Transverse colon (tissue), 4 donors: ENCODE measurements at regions of chr16 and their contacts with region 1.

Region 1: DNA sequence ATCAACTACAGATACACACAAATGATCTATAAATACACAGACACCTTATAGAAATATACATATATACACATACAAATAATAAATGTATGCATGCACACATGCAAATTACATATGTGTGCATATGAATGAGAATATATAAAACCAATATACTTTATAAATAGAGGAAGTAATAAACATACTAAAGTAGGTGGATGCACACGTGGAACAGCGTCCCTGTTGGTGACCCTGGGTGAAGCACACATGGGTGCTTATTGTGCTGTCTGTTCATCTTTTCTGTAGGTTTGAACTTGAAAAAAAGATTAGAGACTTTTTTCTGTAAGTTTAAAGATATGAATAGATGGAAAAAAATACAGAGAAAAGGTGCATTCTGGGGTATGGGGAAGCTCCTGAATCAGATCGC is 111.3 kb downstream of the SDR42E1 start:
- DNase-seq: no peak
- H3K4me3 ChIP-seq: no peak overlapping the region
- H3K27ac ChIP-seq: no peak overlapping the region
- H3K4me1 ChIP-seq: no peaks in the 10 kb centered on the region
- H3K27me3 ChIP-seq: no peaks in the 10 kb centered on the region
- CTCF ChIP-seq: no peak
- EP300 ChIP-seq: no peak
- POLR2A ChIP-seq: no peak

Region 2: GRCh38 chr16:81876273-81876900 is 23.6 kb before region 1 on chr16:
- in situ Hi-C with region 1: no loop called
- intact Hi-C with region 1: loop called (anchors 1 kb)
- DNase-seq: no peak
- H3K4me3 ChIP-seq: no peak overlapping the region
- H3K27ac ChIP-seq: no peak overlapping the region
- H3K4me1 ChIP-seq: no peaks in the 10 kb centered on the region
- H3K27me3 ChIP-seq: no peaks in the 10 kb centered on the region
- CTCF ChIP-seq: no peak
- EP300 ChIP-seq: no peak
- POLR2A ChIP-seq: no peak